Cardiac septum (tissue), 1 donor: ENCODE measurements at regions of chr6 and their contacts with region 1.

Region 1: DNA sequence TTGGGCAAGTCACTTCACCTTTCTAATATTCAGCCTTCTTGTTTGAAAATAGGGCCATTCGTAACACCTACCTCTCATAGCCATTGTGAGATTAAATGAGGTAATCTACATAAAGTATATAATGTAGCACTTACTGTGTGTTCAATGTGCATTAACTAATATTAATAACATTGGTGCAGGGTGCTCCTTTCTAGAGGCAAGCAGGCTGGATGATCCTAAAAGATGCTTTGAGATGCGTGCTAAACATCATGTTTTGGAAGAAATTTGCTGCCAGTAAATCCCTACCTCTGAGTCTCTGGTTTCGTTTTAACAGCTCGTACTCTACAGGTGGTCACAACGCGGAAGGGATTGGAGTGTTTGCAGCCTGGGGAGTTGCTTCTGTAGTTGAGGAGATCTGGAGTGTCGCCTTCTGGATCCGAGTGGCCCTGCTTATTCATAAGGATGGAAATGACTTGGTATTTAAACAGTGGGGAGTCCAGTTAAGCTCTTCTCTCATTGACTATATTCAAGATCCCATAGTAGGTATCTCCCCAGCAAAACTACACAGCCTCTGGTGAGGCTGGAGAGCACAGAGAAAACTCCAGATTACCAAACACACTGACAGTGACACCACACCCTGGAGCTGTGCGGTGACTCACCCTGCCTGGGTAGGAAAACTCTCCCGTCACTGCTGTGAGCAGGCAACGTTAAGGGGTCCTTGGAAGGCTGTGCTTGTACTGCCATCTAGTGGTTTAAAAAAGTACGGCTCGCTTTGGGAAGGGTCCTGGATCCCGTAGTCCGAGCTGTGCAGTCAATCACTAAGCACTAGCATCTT is 107.9 kb downstream of the MAP3K7 start:
- DNase-seq: peak; percentile 89

Region 2: GRCh38 chr6:89829591-89830385 is 649.2 kb before region 1 on chr6 and contains the start of gene CASP8AP2:
- intact Hi-C with region 1: loop called (anchors 10 kb)
- DNase-seq: peak; percentile 96
- total RNA-seq, gene CASP8AP2: 11.6 TPM

Region 3: DNA sequence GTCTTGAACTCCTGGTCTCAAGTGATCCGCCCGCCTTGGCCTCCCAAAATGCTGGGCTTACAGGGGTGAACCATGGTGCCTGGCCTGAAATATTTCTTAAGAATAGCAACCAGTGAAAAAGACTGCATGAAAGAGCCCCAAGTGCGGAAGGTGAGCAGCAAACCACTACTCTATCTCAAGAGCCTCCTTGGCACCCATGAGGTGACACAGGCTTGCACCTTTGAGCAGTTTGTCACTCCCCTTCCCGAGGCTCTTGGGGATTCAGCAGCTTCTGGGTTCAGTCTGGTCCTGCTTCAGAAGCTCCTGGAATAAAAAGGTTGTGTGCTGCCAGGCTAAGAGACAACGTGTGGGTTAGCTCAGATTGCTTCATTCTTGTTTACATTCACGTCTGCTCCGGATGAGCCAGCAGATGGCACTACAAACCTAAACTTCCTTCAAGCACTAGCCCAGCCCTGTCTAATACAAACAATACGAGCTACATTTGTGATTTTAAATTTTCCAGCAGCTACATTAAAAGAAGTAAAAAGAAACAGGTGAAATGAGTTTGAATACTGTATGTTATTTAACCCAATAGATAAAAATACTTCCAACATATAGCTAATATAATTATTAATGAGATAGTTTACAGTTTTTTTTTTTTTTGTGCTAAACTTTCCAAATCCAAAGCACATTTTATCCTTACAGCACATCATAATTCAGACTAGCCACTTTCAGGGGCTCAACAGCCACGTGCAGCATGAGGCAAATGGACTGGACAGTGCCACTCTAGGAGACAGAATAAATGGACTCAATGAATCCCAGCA is 538.6 kb before region 1 on chr6:
- intact Hi-C with region 1: loop called (anchors 2 kb)
- DNase-seq: no peak

Region 4: GRCh38 chr6:90393232-90393884 is 85.6 kb before region 1 on chr6:
- intact Hi-C with region 1: loop called (anchors 5 kb)
- DNase-seq: no peak

Region 5: GRCh38 chr6:90413867-90414266 is 65.1 kb before region 1 on chr6:
- intact Hi-C with region 1: no loop called
- DNase-seq: no peak

Region 6: DNA sequence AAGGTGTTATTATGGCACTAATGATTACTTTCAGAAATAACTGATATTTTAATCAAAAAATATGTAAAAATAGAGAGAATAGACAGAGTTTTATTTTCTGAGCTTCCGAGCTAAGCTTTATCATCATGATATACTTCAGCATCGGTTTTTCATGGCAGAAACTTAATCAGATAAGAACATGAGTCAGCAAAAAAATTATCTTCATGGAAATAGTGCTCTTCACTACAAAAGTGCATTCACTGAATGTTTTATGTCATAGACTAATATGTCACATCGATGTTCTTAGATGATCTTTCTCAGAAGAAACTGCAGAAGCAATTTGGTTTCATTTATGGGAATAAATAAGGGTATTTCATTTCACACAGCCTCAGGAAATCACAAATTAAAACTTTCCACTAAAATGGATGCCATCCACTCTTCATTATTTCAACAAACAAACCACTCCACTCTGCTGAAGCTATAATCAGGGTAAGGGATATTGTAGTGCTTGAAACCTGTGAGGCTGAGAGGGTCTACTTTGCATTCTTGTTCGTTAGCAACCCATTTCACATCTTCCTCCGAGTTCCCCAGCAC is 118.1 kb after region 1 on chr6:
- intact Hi-C with region 1: no loop called
- DNase-seq: no peak